Naive thymus-derived CD4-positive, alpha-beta T cell (primary cell): ENCODE measurements at regions of chr1 and their contacts with region 1.

Region 1: DNA sequence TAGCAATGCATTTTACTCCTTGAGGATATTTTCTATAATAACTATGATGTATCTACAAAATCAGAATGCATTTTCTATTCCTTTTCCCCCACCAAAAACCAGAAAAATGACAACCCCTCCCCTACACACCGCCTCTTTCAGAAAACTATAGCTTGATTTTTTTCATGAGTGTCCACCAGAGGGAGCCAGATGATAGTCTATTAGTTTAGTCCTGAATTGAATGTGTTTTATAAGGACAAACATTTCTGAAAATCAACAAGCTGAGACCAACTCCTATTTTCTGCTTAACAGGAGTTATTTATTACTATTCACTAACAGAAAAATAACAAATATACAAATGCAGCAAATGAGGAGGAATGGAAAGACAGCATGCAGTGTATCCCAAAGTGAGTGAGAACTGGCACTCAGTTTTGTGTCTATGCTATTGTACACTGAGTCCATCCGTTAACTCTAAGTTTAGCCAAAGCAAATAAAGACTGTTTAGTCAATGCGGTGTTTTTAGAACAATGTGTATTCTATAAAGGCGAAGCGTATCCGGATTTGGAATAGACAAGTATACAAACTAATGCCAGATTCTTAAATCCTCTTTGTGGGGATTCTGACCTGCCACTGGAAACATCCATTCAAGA is 182.6 kb downstream of the VAV3 start:
- DNase-seq: peak in 7 of 9 donors; percentile 41 to 76 (median 66)
- ATAC-seq: no peak
- H3K4me3 ChIP-seq: no peak overlapping the region
- H3K4me3 Mint-ChIP-seq: no peak overlapping the region
- H3K27ac ChIP-seq: no peak overlapping the region
- H3K27ac Mint-ChIP-seq: peak overlapping the region in 1 of 9 donors; percentile 1
- H3K4me1 ChIP-seq: peaks cover 18 to 24% of the 10 kb centered on the region in 2 donors
- H3K4me1 Mint-ChIP-seq: peaks cover 23 to 39% (median 25%) of the 10 kb centered on the region in 7 donors
- H3K27me3 ChIP-seq: no peaks in the 10 kb centered on the region
- H3K27me3 Mint-ChIP-seq: peaks cover 0 to 2% (median 0%) of the 10 kb centered on the region in 5 donors

Region 2: GRCh38 chr1:107724648-107725047 is 57.7 kb before region 1 on chr1:
- CTCF ChIA-PET with region 1: no interaction called
- POLR2A ChIA-PET with region 1: no interaction called
- intact Hi-C with region 1: no loop called
- DNase-seq: no peak
- ATAC-seq: no peak
- H3K4me3 ChIP-seq: no peak overlapping the region
- H3K4me3 Mint-ChIP-seq: no peak overlapping the region
- H3K27ac ChIP-seq: no peak overlapping the region
- H3K27ac Mint-ChIP-seq: no peak overlapping the region
- H3K4me1 ChIP-seq: no peaks in the 10 kb centered on the region
- H3K4me1 Mint-ChIP-seq: no peaks in the 10 kb centered on the region
- H3K27me3 ChIP-seq: no peaks in the 10 kb centered on the region
- H3K27me3 Mint-ChIP-seq: no peaks in the 10 kb centered on the region

Region 3: DNA sequence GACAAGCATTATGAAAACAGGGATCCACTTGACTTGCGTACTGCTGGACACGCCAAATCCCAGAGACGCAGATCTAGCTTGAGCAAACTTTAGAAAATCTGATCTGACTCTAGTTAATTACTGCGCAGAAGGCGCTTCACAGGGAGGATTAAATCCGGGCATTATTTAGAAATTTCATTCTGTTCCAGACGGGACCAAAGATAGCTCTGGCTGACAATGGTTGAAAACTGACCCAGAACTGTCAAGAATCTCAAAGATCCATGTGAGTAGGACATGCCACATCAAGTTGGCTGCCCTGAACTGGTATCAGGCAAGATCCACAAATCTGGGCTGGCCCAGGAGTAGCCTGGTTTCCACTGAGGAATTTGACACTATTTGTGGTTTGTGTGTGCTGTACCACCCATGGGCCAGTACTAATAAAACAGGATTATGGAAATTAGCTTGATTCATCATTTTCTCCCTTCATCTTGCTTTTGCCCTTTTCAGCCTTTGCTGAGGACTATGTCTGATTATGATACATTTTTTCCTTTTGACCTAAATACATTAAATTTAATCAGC is 11.6 kb after region 1 on chr1:
- CTCF ChIA-PET with region 1: interaction called, 17 read pairs
- POLR2A ChIA-PET with region 1: interaction called, 3 read pairs
- intact Hi-C with region 1: no loop called
- DNase-seq: no peak
- ATAC-seq: no peak
- H3K4me3 ChIP-seq: no peak overlapping the region
- H3K4me3 Mint-ChIP-seq: no peak overlapping the region
- H3K27ac ChIP-seq: no peak overlapping the region
- H3K27ac Mint-ChIP-seq: no peak overlapping the region
- H3K4me1 ChIP-seq: no peaks in the 10 kb centered on the region
- H3K4me1 Mint-ChIP-seq: peaks cover 6 to 38% (median 18%) of the 10 kb centered on the region in 7 donors
- H3K27me3 ChIP-seq: no peaks in the 10 kb centered on the region
- H3K27me3 Mint-ChIP-seq: no peaks in the 10 kb centered on the region

Region 4: DNA sequence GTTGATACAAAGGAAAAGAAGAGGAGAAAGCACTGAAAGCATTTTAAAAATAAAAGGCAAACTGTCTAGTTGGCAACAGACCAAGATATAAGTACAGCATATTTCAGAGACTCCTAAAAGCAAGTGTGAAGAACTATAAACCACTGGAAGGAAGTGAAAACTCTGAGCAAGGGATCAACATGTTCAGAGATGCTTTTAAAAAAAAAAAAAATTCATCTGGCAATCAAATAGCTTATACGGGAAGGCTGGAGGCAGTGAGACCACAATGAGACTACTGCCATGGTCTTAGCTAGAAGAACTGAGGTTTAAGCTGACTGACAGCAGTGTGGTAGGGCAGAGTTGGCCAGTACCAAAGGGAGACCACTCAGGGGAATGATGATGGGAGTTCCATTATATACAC is 58.4 kb after region 1 on chr1:
- CTCF ChIA-PET with region 1: interaction called, 5 read pairs
- POLR2A ChIA-PET with region 1: no interaction called
- intact Hi-C with region 1: loop called (anchors 5 kb)
- DNase-seq: no peak
- ATAC-seq: peak; percentile 50
- H3K4me3 ChIP-seq: peak overlapping the region; percentile 26
- H3K4me3 Mint-ChIP-seq: peak overlapping the region; percentile 0 to 75 (median 28)
- H3K27ac ChIP-seq: no peak overlapping the region
- H3K27ac Mint-ChIP-seq: peak overlapping the region; percentile 2 to 75 (median 25)
- H3K4me1 ChIP-seq: peaks cover 32 to 51% of the 10 kb centered on the region in 2 donors
- H3K4me1 Mint-ChIP-seq: peaks cover 38 to 87% (median 59%) of the 10 kb centered on the region in 7 donors
- H3K27me3 ChIP-seq: no peaks in the 10 kb centered on the region
- H3K27me3 Mint-ChIP-seq: no peaks in the 10 kb centered on the region

Region 5: GRCh38 chr1:108049178-108049819 is 267.0 kb after region 1 on chr1:
- CTCF ChIA-PET with region 1: interaction called, 5 read pairs
- POLR2A ChIA-PET with region 1: no interaction called
- intact Hi-C with region 1: loop called in 1 of 2 experiments (anchors 10 kb)
- DNase-seq: peak in 2 of 9 donors; percentile 30 to 35
- ATAC-seq: peak; percentile 40
- H3K4me3 ChIP-seq: no peak overlapping the region
- H3K4me3 Mint-ChIP-seq: peak overlapping the region in 5 of 10 donors; percentile 10 to 43 (median 17)
- H3K27ac ChIP-seq: no peak overlapping the region
- H3K27ac Mint-ChIP-seq: peak overlapping the region in 3 of 9 donors; percentile 18 to 68 (median 65)
- H3K4me1 ChIP-seq: peaks cover 0 to 43% of the 10 kb centered on the region in 2 donors
- H3K4me1 Mint-ChIP-seq: peaks cover 0 to 38% (median 30%) of the 10 kb centered on the region in 7 donors
- H3K27me3 ChIP-seq: no peaks in the 10 kb centered on the region
- H3K27me3 Mint-ChIP-seq: peaks cover 0 to 3% (median 0%) of the 10 kb centered on the region in 5 donors

Region 6: GRCh38 chr1:108125312-108126138 is 343.2 kb after region 1 on chr1:
- CTCF ChIA-PET with region 1: interaction called, 259 read pairs
- POLR2A ChIA-PET with region 1: interaction called, 5 read pairs
- intact Hi-C with region 1: loop called (anchors 1 kb)
- DNase-seq: peak; percentile 35 to 77 (median 67)
- ATAC-seq: peak; percentile 97
- H3K4me3 ChIP-seq: no peak overlapping the region
- H3K4me3 Mint-ChIP-seq: no peak overlapping the region
- H3K27ac ChIP-seq: no peak overlapping the region
- H3K27ac Mint-ChIP-seq: peak overlapping the region in 4 of 9 donors; percentile 19 to 69 (median 48)
- H3K4me1 ChIP-seq: no peaks in the 10 kb centered on the region
- H3K4me1 Mint-ChIP-seq: peaks cover 4 to 10% (median 5%) of the 10 kb centered on the region in 7 donors
- H3K27me3 ChIP-seq: no peaks in the 10 kb centered on the region
- H3K27me3 Mint-ChIP-seq: no peaks in the 10 kb centered on the region

Region 7: DNA sequence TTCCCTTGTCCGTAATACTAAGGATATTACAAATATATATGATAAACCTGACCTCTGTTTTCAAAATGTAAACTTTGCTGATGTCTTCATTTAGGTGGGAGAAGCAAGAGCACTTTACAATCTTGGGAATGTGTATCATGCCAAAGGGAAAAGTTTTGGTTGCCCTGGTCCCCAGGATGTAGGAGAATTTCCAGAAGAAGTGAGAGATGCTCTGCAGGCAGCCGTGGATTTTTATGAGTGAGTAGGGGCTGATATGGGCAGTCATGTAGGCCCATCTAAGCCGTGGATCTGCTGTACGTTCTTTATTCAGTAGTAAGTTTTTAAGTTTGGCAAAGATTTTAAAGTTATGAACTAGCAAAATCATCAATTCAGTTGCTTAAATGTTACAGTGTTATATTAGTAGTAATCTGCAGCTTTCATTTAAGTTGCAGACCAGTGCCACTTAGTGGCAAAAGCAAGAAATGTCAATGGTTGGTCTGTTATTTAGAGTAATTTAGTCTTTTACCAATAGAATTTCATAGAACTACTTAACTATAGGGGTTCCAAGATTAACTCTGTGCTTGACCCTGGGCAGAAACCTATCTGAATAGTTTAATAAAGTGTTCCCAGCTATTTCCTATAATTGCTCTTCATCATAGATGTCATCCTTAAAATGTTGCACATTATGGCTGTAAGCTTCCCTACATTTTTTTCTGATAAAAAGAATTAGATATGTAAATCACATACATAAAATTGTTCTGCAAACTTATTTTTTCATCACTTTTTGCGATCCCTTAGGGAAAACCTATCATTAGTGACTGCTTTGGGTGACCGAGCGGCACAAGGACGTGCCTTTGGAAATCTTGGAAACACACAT is 1115.8 kb after region 1 on chr1:
- CTCF ChIA-PET with region 1: no interaction called
- POLR2A ChIA-PET with region 1: no interaction called
- intact Hi-C with region 1: loop called in 1 of 2 experiments (anchors 10 kb)
- DNase-seq: peak in 7 of 9 donors; percentile 30 to 67 (median 54)
- ATAC-seq: peak; percentile 82
- H3K4me3 ChIP-seq: no peak overlapping the region
- H3K4me3 Mint-ChIP-seq: no peak overlapping the region
- H3K27ac ChIP-seq: no peak overlapping the region
- H3K27ac Mint-ChIP-seq: no peak overlapping the region
- H3K4me1 ChIP-seq: no peaks in the 10 kb centered on the region
- H3K4me1 Mint-ChIP-seq: peaks cover 0 to 4% (median 1%) of the 10 kb centered on the region in 7 donors
- H3K27me3 ChIP-seq: no peaks in the 10 kb centered on the region
- H3K27me3 Mint-ChIP-seq: peaks cover 0 to 4% (median 3%) of the 10 kb centered on the region in 5 donors